Heart left ventricle (tissue), 16 donors: ENCODE measurements at regions of chr1 and their contacts with region 1.

Region 1: GRCh38 chr1:68745011-68745410 is 248.1 kb upstream of the DEPDC1 start:
- DNase-seq: no peak
- ATAC-seq: no peak
- H3K4me3 ChIP-seq: no peak overlapping the region
- H3K27ac ChIP-seq: peak overlapping the region in 1 of 12 donors; percentile 15
- H3K4me1 ChIP-seq: peaks cover 0 to 6% (median 0%) of the 10 kb centered on the region in 12 donors
- H3K27me3 ChIP-seq: no peaks in the 10 kb centered on the region
- CTCF ChIP-seq: no peak
- POLR2A ChIP-seq: no peak

Region 2: DNA sequence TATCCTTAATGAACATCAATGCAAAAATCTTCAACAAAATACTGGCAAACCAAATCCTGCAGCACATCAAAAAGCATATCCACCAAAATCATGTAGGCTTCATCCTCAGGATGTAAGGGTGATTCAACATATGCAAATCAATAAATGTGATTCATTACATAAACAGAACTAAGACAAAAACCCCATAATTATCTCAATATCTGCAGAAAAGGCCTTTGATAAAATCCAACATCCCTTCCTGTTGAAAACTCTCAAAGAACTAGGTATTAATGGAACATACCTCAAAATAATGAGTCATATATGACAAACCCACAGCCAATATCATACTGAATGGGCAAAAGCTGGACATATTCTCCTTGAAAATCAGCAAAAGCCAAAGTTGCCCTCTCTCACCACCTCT is 193.6 kb before region 1 on chr1:
- intact Hi-C with region 1: no loop called
- DNase-seq: no peak
- ATAC-seq: no peak
- H3K4me3 ChIP-seq: no peak overlapping the region
- H3K27ac ChIP-seq: no peak overlapping the region
- H3K4me1 ChIP-seq: no peaks in the 10 kb centered on the region
- H3K27me3 ChIP-seq: no peaks in the 10 kb centered on the region
- CTCF ChIP-seq: no peak
- POLR2A ChIP-seq: no peak

Region 3: GRCh38 chr1:68954841-68955240 is 209.8 kb after region 1 on chr1:
- intact Hi-C with region 1: loop called in 1 of 10 experiments (anchors 5 kb)
- DNase-seq: no peak
- ATAC-seq: no peak
- H3K4me3 ChIP-seq: no peak overlapping the region
- H3K27ac ChIP-seq: no peak overlapping the region
- H3K4me1 ChIP-seq: peaks cover 0 to 6% (median 0%) of the 10 kb centered on the region in 12 donors
- H3K27me3 ChIP-seq: no peaks in the 10 kb centered on the region
- CTCF ChIP-seq: no peak
- POLR2A ChIP-seq: no peak